ENCODE measurements at regions of chr16 and their contacts with region 1.

Region 1: DNA sequence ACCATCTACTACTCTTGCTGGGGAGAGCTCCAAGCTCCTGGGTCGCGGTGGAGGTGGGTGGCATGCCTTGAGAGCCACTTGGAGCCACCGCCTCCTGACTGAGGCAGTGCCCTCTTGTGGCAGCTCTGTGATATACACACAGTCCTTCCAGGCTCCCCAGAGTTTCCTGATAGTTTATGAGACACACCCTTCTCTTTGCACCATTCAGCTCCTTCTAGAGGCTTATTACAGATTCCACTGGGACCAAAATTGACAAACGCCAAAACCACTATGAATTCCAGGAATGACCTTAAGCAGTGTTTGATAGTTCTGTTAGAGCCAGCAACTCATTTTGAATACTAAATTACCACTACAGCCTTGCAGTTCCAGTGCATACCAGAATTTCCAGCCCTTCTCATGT is 170.1 kb upstream of the CDH13 start:
- DNase-seq: peak; percentile 62
- H3K4me3 ChIP-seq: no peak overlapping the region
- H3K27ac ChIP-seq: no peak overlapping the region
- H3K4me1 ChIP-seq: no peaks in the 10 kb centered on the region
- H3K27me3 ChIP-seq: peaks cover 0 to 8% of the 10 kb centered on the region in 2 experiments
- CTCF ChIP-seq: peak; percentile 80 to 89
- POLR2A ChIP-seq: no peak

Region 2: GRCh38 chr16:82439671-82440293 is 16.9 kb before region 1 on chr16:
- CTCF ChIA-PET with region 1: interaction called, 20 read pairs
- POLR2A ChIA-PET with region 1: no interaction called
- dilution Hi-C with region 1: no loop called
- intact Hi-C with region 1: no loop called
- DNase-seq: peak; percentile 6
- H3K4me3 ChIP-seq: no peak overlapping the region
- H3K27ac ChIP-seq: no peak overlapping the region
- H3K4me1 ChIP-seq: no peaks in the 10 kb centered on the region
- H3K27me3 ChIP-seq: peaks cover 7 to 10% of the 10 kb centered on the region in 2 experiments
- CTCF ChIP-seq: peak; percentile 30 to 66
- POLR2A ChIP-seq: no peak

Region 3: DNA sequence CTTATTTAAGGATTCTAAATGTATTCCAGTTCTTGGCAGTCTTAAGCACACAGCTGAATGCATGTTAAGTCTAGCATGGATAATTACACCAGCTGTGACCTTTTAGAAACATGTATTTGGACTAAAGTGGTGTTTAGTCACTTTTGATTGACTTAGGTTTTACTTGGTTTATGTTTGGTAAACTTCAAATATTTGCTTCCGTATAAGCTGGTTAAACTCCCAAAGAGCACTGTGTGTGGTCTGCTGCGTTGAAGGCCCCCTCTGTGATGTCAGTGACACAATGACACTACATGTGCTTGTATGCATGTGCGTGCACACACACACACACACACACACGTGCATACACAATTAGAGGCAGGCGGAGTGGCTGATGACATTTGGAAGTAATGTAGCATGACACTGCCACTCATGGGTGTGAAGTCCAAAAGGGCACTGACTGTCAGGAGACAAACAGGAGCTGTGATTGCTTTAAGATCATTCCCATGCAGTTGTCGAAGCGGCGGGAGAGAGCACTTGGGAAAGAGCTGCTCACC is 14.0 kb after region 1 on chr16:
- CTCF ChIA-PET with region 1: interaction called, 31 read pairs
- POLR2A ChIA-PET with region 1: no interaction called
- dilution Hi-C with region 1: no loop called
- intact Hi-C with region 1: no loop called
- DNase-seq: no peak
- H3K4me3 ChIP-seq: no peak overlapping the region
- H3K27ac ChIP-seq: no peak overlapping the region
- H3K4me1 ChIP-seq: no peaks in the 10 kb centered on the region
- H3K27me3 ChIP-seq: peaks cover 0 to 3% of the 10 kb centered on the region in 2 experiments
- CTCF ChIP-seq: no peak
- POLR2A ChIP-seq: no peak